GM10248 (cell line): ENCODE measurements at regions of chr7 and their contacts with region 1.

Region 1: DNA sequence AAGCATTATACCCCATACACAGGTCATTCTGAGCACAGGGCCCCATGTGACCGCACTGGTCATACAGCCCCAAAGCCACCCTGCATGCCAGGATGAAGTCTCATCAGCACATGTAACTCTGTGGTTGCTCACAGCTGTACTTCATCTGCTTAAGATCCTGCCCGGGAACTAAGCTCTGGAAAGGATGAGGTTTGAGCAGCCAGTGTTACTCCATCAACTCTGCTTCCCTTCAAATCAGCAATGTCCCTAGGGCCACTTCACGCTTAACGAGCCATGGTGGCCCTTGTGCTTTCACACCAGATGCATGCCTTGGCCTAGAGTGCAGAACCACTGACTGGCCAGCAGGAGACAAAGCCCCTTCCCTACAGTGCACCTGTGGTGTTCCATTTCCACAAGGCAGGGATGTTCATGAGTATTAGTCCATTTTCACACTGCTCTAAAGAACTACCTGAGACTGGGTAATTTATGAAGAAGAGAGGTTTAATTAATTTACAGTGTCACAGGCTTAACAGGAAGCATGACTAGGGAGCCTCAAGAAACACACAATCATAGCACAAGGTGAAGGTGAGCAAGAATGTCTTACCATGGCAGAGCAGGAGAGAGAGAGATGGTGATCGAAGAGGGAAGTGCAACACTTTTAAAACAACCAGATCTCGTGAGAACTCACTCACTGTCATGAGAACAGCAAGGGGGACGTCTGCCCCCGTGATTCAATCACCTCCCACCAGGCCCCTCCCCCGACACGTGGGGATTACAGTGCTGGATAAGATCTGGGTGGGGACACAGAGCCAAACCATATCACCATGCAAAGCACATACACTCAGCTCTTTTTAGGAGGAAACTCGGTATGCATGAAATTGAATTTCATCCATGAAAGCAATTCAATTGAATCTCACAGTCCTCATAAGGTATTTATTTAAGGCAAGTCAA is 149.0 kb upstream of the CDCA7L start:
- DNase-seq: no peak
- CTCF ChIP-seq: no peak

Region 2: GRCh38 chr7:22082886-22083703 is 11.6 kb before region 1 on chr7:
- CTCF ChIA-PET with region 1: interaction called, 51 read pairs
- POLR2A ChIA-PET with region 1: no interaction called
- DNase-seq: peak; percentile 89
- CTCF ChIP-seq: peak; percentile 96